GM13977 (cell line): ENCODE measurements at regions of chr9 and their contacts with region 1.

Region 1: GRCh38 chr9:127214421-127215267 is 49.9 kb upstream of the GARNL3 start:
- DNase-seq: peak; percentile 84
- CTCF ChIP-seq: peak; percentile 88

Region 2: DNA sequence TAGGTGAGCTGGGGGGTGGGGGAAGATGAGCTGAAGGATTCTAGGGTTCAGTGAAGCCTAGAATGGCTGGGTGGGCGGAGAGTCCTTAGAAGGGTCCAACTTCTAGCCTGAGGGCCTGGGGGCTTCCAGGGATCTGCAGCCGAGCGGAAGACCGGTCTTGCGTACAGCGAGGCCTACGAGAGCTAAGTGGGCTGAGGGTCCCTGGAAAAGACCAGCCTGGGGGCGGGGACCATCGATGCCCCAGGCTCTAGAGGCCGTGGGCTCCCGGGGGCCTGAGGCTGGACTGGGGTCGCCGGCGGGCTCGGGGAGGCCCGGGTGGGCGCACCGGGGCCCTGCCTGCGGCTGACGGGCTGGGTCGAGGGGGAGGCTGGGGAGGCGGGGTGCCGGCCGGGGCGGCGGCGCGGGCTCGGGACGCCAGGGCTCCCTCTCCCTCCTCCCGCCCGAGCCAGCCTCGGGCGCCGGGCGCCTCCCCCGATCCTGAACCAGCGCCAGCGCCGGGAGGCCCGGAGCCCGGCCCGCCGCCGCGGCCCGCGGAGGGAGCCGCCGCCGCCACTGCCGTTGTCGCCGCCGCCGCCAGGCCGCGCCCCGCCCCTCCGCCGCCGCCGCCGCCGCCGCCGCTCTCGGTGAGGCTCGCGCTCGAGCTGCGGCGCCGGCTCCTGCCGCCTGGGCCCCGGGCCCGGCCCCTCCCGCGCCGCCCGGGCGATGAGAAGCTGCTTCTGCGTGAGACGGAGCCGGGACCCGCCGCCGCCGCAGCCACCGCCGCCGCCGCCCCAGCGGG is 888.2 kb before region 1 on chr9 and contains the start of gene MVB12B:
- in situ Hi-C with region 1: no loop called
- DNase-seq: peak; percentile 84
- CTCF ChIP-seq: no peak

Region 3: DNA sequence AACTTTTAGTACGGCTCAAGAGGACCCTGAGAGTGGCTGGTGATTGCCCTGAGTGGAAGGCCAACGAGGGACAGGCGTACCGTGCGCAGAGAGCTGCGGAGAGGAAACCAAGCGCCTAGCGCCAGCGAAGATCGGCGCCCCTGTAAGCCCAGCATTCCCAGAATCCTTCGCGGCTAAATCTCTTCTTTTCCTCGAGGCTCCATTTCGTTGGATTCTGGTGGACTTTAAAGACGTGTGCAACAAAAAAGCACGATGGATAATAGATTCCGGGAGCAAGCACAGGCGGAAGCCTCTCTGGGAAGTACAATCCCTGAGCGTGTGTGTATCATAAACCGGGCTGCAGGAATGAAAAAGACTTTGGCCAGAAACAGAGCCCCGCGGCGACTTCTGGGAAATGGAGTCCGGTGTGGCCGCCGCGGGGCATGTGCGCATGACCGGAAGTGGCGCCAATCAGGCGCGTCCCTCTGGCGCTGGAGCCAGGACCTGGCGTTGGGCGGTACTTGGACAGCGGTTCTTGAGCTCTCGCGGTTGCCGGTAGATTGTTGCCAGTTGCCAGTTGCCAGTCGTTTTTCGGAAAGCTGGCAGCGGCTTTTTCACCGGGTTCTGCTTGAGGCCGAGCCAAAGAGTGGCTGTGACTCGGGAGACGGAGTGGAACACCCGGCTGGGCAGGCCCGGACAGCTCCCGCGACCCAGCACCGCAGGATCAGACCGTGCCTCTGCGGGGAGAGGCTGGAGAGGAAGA is 209.5 kb after region 1 on chr9 and contains the start of gene ZNF79:
- in situ Hi-C with region 1: loop called (anchors 10 kb)
- DNase-seq: peak; percentile 95
- CTCF ChIP-seq: no peak